ENCODE measurements at regions of chr18 and their contacts with region 1.

Region 1: GRCh38 chr18:4251873-4252272 is 203.2 kb downstream of the DLGAP1 start:
- DNase-seq: no peak
- ATAC-seq: no peak
- H3K4me3 ChIP-seq: no peak overlapping the region
- H3K4me3 Mint-ChIP-seq: no peak overlapping the region
- H3K27ac ChIP-seq: no peak overlapping the region
- H3K27ac Mint-ChIP-seq: no peak overlapping the region
- H3K4me1 ChIP-seq: no peaks in the 10 kb centered on the region
- H3K4me1 Mint-ChIP-seq: no peaks in the 10 kb centered on the region
- H3K27me3 ChIP-seq: no peaks in the 10 kb centered on the region
- H3K27me3 Mint-ChIP-seq: no peaks in the 10 kb centered on the region
- CTCF ChIP-seq: no peak

Region 2: GRCh38 chr18:4196345-4196744 is 55.5 kb before region 1 on chr18:
- intact Hi-C with region 1: loop called (anchors 10 kb)
- DNase-seq: no peak
- ATAC-seq: no peak
- H3K4me3 ChIP-seq: no peak overlapping the region
- H3K4me3 Mint-ChIP-seq: no peak overlapping the region
- H3K27ac ChIP-seq: no peak overlapping the region
- H3K27ac Mint-ChIP-seq: no peak overlapping the region
- H3K4me1 ChIP-seq: no peaks in the 10 kb centered on the region
- H3K4me1 Mint-ChIP-seq: no peaks in the 10 kb centered on the region
- H3K27me3 ChIP-seq: no peaks in the 10 kb centered on the region
- H3K27me3 Mint-ChIP-seq: no peaks in the 10 kb centered on the region
- CTCF ChIP-seq: no peak

Measured in natural killer cell (primary cell).